ENCODE measurements at regions of chr3 and their contacts with region 1.

Region 1: DNA sequence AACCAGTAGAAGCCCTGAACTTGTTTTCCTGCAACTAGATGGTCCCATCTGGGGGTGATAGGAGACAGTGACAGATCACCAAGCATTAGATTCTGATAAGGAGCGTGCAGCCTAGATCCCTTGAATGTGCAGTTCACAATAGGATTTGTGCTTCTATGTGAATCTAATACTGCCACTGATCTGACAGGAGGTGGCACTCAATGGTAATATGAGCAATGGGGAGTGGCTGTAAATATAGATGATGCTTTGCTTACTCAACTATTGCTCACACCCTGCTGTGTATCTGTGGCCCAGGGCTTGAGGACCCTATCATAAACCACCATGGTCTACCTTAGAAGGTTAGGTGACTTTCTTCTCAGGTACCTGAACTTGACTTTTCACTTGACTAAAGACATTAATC is 417.1 kb upstream of the ARHGEF26 start:
- DNase-seq: peak; percentile 5
- H3K4me3 ChIP-seq: no peak overlapping the region
- H3K27ac ChIP-seq: no peak overlapping the region
- H3K4me1 ChIP-seq: no peaks in the 10 kb centered on the region
- H3K27me3 ChIP-seq: peaks cover 16% of the 10 kb centered on the region
- CTCF ChIP-seq: 0 out of 2 replicates have a peak, but pooled peaks have one; percentile 26

Region 2: GRCh38 chr3:153026026-153026425 is 678.1 kb before region 1 on chr3:
- CTCF ChIA-PET with region 1: no interaction called
- POLR2A ChIA-PET with region 1: no interaction called
- intact Hi-C with region 1: no loop called
- DNase-seq: peak; percentile 62
- H3K4me3 ChIP-seq: no peak overlapping the region
- H3K27ac ChIP-seq: no peak overlapping the region
- H3K4me1 ChIP-seq: peaks cover 19% of the 10 kb centered on the region
- H3K27me3 ChIP-seq: no peaks in the 10 kb centered on the region
- CTCF ChIP-seq: peak; percentile 78

Region 3: DNA sequence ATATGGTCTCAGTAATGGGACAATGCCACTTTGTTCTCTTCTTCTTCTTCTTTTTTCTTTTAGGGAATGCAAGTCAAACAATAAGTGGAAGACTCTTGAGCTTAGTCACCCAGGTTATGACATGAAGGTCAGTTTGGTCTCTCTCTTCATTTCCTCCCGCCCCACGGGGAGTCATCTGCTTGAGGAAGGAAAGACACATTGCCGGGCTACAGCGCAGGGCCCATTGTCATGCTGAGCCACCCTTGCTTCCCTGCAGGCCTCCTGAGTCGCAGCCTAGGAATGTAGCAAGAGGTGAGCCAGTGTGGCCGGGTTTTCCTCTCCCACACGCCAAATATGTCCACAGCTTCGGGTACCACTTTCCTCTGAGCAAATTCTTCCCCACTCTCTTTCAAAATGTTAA is 494.5 kb before region 1 on chr3:
- CTCF ChIA-PET with region 1: no interaction called
- POLR2A ChIA-PET with region 1: no interaction called
- intact Hi-C with region 1: no loop called
- DNase-seq: peak; percentile 63
- H3K4me3 ChIP-seq: no peak overlapping the region
- H3K27ac ChIP-seq: no peak overlapping the region
- H3K4me1 ChIP-seq: peaks cover 7% of the 10 kb centered on the region
- H3K27me3 ChIP-seq: no peaks in the 10 kb centered on the region
- CTCF ChIP-seq: no peak

Region 4: GRCh38 chr3:153429821-153430220 is 274.3 kb before region 1 on chr3:
- CTCF ChIA-PET with region 1: no interaction called
- POLR2A ChIA-PET with region 1: no interaction called
- intact Hi-C with region 1: no loop called
- DNase-seq: peak; percentile 55
- H3K4me3 ChIP-seq: no peak overlapping the region
- H3K27ac ChIP-seq: no peak overlapping the region
- H3K4me1 ChIP-seq: peaks cover 9% of the 10 kb centered on the region
- H3K27me3 ChIP-seq: no peaks in the 10 kb centered on the region
- CTCF ChIP-seq: no peak

Region 5: DNA sequence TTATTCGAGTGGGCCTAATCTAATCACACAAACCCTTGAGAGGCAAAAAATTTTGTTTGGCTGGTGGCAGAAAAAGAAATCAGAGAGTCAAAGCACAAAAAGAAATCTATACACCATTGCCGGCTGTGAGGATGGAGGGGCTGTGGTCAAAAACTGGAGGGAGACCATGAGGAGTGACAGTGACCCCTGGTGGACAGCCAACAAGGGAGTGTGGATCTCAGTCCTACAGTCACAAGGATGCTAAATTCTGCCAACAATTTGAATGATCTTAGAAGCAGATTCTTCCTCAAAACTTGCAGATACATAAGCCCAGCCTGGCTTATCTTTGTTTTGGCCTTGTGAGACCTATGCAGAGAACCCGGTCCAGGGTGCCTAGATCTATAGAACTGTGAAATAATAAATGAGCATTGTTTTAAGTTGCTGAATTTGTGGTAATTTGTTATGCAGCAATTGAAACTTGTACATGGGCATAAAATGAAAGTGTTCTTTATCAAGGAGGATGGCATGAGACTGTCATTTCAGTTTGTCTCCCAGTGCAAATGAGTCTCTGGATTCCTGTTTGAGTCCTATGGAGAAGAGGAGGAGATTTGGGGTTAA is 314.1 kb after region 1 on chr3:
- CTCF ChIA-PET with region 1: interaction called, 10 read pairs
- POLR2A ChIA-PET with region 1: no interaction called
- intact Hi-C with region 1: no loop called
- DNase-seq: peak; percentile 64
- H3K4me3 ChIP-seq: no peak overlapping the region
- H3K27ac ChIP-seq: no peak overlapping the region
- H3K4me1 ChIP-seq: no peaks in the 10 kb centered on the region
- H3K27me3 ChIP-seq: no peaks in the 10 kb centered on the region
- CTCF ChIP-seq: peak; percentile 74

Measured in A673 (cell line).